ENCODE measurements at regions of chr10 and their contacts with region 1.

Region 1: DNA sequence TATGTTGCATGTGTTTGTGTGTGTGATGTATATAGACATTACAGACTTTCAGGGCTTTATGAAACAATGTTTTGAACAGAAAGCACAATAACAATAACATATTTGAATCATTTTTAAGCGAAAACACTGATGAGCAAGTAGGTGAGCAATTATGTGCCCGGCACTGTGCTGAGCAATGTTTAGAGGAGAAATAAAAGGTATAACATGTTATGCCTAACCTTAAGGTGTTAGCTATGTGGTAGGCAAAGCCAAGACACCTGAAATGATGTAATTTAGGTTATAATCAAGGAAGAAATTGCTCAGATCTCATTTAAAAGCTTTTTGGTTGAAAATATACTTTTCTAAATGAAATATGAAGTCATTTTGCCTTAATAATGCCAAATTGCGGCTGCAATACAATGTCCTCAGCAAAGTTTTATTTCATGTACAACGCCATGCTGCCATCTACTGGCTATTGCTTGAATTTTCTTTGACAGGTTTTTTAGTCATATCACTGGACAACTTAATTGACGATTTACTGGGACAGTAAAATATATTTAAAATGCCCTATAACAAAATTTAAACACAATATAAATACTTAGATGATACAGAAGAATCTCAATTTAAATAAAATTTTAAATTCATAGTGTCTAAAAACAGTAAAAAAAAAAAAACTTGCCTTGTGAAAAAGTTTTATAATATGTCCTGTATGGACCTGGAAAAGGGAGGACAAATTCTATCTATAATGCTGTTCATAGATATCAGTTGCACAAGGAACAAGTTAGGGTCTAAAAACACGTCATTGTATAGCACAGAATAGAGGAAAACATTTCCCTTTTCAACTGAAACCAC is 131.1 kb upstream of the CDK1 start:
- DNase-seq: peak; percentile 31
- H3K4me3 ChIP-seq: no peak overlapping the region
- H3K27ac ChIP-seq: no peak overlapping the region
- H3K4me1 ChIP-seq: no peaks in the 10 kb centered on the region
- H3K27me3 ChIP-seq: no peaks in the 10 kb centered on the region
- CTCF ChIP-seq: peak; percentile 60 to 71

Region 2: DNA sequence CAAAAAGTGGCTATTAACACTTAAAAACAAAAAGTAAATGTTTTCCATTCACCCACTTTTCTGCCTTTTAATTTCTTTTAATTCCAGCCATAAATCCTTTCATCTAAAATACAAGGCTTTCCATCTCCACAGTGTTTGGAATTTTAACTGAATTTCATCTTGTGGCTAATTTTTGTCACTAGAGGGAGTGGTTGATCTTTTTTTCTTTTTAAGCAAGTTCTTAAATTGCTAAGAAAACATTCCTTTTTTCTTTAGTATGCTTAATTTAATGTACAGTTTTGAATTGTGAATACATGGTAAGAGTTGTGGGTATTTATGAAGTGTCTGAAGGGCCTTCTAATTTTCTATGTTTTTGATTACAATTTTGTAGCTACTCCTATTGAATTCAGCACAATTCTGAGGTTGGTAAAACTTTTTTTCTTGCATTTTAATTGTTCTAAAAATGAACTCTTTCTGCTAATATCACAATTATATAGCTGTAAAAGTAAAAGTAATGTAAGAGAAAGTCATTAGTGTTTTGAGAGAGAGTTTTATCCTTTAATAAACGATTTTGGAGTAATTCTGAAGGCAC is 202.6 kb before region 1 on chr10:
- CTCF ChIA-PET with region 1: no interaction called
- dilution Hi-C with region 1: no loop called
- in situ Hi-C with region 1: loop called in 1 of 2 experiments (anchors 5 kb)
- intact Hi-C with region 1: loop called (anchors 1 kb)
- DNase-seq: no peak
- H3K4me3 ChIP-seq: no peak overlapping the region
- H3K27ac ChIP-seq: no peak overlapping the region
- H3K4me1 ChIP-seq: peaks cover 25% of the 10 kb centered on the region
- H3K27me3 ChIP-seq: no peaks in the 10 kb centered on the region
- CTCF ChIP-seq: peak; percentile 47 to 54

Region 3: DNA sequence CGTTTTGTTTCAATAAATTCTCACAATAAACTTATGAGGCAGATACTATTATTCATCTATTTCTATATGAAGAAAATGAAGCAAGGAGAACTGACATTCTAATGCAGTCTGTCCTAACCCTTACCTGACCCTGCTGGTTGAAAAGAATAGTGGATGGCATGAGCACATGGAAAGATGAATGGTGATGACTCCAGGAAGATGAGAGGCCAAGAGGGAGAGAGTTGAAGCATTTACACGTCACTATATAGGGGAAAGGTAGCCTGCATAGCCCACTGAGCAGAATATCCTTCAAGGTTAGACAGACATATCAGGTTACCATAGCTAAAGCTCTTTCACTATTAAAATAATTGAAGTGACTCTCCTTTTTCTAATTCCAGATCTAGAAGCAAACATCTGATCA is 32.8 kb before region 1 on chr10:
- CTCF ChIA-PET with region 1: no interaction called
- dilution Hi-C with region 1: no loop called
- in situ Hi-C with region 1: no loop called
- intact Hi-C with region 1: no loop called
- DNase-seq: no peak
- H3K4me3 ChIP-seq: no peak overlapping the region
- H3K27ac ChIP-seq: no peak overlapping the region
- H3K4me1 ChIP-seq: peaks cover 16% of the 10 kb centered on the region
- H3K27me3 ChIP-seq: no peaks in the 10 kb centered on the region
- CTCF ChIP-seq: no peak

Region 4: DNA sequence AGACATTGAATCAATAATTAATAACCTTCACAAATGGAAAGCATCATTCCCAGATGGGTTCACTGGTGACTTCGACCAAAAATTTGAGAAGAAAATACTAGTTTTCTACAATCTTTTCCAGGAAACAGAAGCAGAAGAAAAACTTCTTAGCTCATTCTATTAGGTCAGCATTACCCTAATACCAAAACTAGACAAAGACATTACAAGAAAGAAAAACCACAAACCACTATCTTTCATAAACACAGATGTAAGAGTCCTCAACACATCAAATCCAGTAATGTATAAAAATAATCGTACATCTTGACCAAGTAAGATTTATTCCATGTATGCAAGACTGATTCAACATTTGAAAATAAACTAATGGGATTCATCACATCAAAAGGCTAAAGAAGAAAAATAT is 67.1 kb after region 1 on chr10:
- CTCF ChIA-PET with region 1: no interaction called
- dilution Hi-C with region 1: no loop called
- in situ Hi-C with region 1: no loop called
- intact Hi-C with region 1: no loop called
- DNase-seq: no peak
- H3K4me3 ChIP-seq: no peak overlapping the region
- H3K27ac ChIP-seq: no peak overlapping the region
- H3K4me1 ChIP-seq: no peaks in the 10 kb centered on the region
- H3K27me3 ChIP-seq: no peaks in the 10 kb centered on the region
- CTCF ChIP-seq: no peak